Activated T-helper 2 cell treated with anti-CD3 and anti-CD28 coated beads, Interferon-gamma antibody, Interleukin-2, Interleukin-4, amounts not matched to agents 10 μg/mL and 5 μg/mL and 100 μg/mL, durations not matched to agents 14 hours and 24 hours and 36 hours (primary cell): ENCODE measurements at regions of chr1 and their contacts with region 1.

Region 1: DNA sequence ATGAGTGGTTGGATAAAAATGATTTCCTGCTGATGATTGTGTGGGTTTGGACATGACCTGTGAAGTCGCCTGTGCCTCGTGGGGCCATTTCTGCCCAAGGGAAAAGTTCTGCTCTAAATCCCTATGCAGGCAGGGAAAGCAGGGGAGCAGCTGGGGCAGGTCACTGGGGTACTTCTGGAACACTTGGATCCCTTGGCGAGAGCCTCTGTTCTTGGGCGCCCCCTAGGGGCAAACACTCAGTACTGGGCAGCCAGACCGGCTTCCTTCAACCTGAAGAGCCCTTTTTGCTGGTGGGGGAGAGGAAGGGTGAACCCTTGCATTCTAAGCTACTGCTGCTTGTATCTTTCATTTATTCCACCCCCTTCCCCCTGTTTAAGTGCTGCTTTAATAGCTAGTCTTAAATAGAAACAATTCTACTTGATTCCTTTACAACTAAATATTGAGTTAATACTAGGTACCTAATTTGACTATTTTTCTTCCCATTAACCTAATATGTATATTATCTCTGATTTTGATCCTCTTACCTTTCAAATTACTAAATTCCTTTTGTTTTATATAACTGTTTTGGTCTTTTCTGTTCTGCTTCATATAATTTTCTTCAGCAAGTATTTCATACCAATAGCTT is 5.1 kb upstream of the CLEC20A start:
- DNase-seq: peak; percentile 33
- H3K4me3 Mint-ChIP-seq: no peak overlapping the region
- H3K27ac Mint-ChIP-seq: no peak overlapping the region
- H3K4me1 Mint-ChIP-seq: no peaks in the 10 kb centered on the region
- H3K27me3 Mint-ChIP-seq: no peaks in the 10 kb centered on the region

Region 2: DNA sequence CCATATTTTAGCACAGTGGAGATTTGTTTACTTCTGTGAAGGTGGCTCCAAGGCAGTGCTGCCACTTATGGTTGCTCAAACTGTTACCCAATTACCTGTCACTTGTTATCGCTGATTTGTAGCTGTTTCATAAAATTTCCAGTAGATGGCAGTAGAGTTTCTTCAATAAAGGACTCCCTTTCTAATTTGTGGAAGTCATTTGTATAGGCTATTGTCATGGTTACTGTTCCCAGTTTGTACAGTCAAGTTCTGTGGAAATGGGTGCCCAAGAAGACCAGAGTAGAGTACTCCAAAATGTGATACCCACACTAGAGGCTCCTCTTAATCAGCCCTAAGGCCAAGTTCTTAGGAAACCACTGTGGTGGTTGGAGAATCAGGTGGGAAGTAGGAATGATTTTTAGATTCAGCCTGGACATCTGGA is 191.1 kb before region 1 on chr1:
- intact Hi-C with region 1: loop called (anchors 5 kb)
- DNase-seq: no peak
- H3K4me3 Mint-ChIP-seq: no peak overlapping the region
- H3K27ac Mint-ChIP-seq: no peak overlapping the region
- H3K4me1 Mint-ChIP-seq: no peaks in the 10 kb centered on the region
- H3K27me3 Mint-ChIP-seq: no peaks in the 10 kb centered on the region

Region 3: GRCh38 chr1:178644308-178645120 is 142.7 kb after region 1 on chr1:
- intact Hi-C with region 1: no loop called
- DNase-seq: no peak
- H3K4me3 Mint-ChIP-seq: no peak overlapping the region
- H3K27ac Mint-ChIP-seq: no peak overlapping the region
- H3K4me1 Mint-ChIP-seq: no peaks in the 10 kb centered on the region
- H3K27me3 Mint-ChIP-seq: peaks cover 2% of the 10 kb centered on the region